ENCODE measurements at regions of chrX and their contacts with region 1.

Region 1: GRCh38 chrX:15674841-15675489 is 10.4 kb upstream of the CLTRN start:
- DNase-seq: peak; percentile 98
- H3K4me3 Mint-ChIP-seq: no peak overlapping the region
- H3K27ac Mint-ChIP-seq: no peak overlapping the region
- H3K4me1 Mint-ChIP-seq: peaks cover 16% of the 10 kb centered on the region
- H3K27me3 Mint-ChIP-seq: peaks cover 17% of the 10 kb centered on the region
- CTCF ChIP-seq: no peak

Region 2: DNA sequence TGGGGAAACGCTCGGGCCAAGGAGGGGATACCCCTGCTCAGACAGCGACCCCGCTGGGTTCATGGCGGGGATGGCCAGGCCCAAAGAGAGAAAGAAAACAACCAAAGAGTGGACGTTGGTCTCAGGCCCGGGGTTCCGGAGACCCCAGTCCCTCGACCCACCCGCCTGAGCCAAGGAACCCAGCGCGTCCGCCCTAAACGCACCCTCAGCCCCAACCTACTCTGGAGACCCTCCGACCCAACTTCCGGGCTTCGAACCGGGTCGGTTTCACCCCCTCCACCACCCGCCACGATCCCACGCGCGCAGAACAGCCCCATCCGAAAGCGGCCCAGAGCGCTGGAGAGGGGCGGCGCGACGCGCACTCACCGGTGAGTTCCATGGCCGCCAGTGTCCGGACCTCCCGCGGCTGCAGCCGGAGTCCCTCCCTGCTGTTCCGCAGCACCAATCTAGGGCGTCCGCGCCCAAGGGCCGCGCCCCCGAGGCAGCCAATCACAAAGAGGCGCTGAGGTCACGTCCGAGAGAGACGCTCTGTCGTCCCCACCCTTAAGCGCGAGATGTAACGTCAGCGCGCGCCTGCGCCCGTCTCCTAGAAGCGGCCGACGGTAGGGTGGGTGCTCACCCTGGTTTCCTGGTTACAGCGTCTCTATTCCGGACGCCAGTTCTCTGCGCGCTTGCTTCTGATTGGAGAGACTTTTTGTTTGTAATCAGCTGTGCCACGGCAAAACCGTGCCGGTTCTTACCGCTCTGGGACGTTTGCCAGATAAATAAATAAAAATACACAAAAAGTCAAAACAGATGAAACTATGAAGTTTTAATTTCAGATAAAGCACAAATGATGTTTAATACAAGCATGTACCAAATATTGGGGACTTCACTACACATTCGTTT is 339.6 kb before region 1 on chrX and contains the start of gene PIGA:
- CTCF ChIA-PET with region 1: no interaction called
- POLR2A ChIA-PET with region 1: no interaction called
- intact Hi-C with region 1: loop called (anchors 10 kb)
- DNase-seq: peak; percentile 94
- H3K4me3 Mint-ChIP-seq: peak within 1 kb of the TSS; percentile 80
- H3K27ac Mint-ChIP-seq: peak within 1 kb of the TSS; percentile 88
- H3K4me1 Mint-ChIP-seq: peaks cover 5% of the 10 kb centered on the region
- H3K27me3 Mint-ChIP-seq: peaks cover 45% of the 10 kb centered on the region
- CTCF ChIP-seq: no peak
- total RNA-seq, gene PIGA: 17.3 and 22.7 TPM in 2 replicates

Region 3: DNA sequence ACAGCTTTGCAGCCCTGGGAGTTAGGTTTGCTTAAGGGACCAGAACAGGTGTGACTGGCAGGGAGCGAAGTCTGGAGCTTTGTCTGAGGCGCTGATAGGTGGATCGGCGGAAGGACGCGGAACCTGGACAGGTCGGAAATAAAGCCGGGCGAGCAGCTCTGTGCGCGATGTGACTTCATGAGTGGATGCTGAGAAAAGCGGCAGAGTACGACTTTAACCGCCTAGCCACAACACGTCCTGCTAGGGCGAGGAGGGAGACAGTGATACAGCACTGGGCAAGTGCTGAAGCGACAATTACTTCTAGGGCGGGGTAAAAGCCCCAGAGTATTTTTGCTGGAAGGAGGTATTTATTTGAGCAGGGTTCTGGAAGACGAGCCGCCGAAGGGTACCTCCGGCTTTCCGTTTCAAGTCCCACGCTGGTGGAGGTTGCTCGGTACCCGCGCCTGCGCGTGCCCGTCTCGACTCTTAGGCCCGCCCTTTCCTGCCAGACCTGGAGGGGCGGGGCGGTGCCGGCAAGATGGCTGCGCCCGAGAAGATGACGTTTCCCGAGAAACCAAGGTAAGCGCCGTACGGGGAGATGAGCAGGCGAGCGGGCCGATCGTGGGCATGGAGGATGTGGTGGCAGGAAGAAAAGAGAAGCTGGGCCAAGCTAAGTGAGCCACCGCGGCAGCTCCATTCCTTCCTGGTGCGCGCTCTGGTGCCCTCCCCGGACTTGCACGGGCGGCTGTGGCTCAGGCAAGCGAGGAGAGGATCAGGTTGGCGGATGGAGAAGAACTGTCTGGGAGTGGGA is 115.2 kb after region 1 on chrX and contains the start of gene ZRSR2:
- CTCF ChIA-PET with region 1: no interaction called
- POLR2A ChIA-PET with region 1: interaction called, 11 read pairs
- intact Hi-C with region 1: no loop called
- DNase-seq: peak; percentile 84
- H3K4me3 Mint-ChIP-seq: no peak within 1 kb of the TSS
- H3K27ac Mint-ChIP-seq: no peak within 1 kb of the TSS
- H3K4me1 Mint-ChIP-seq: no peaks in the 10 kb centered on the region
- H3K27me3 Mint-ChIP-seq: no peaks in the 10 kb centered on the region
- CTCF ChIP-seq: no peak
- total RNA-seq, gene ZRSR2: 17.0 and 20.3 TPM in 2 replicates